Transverse colon (tissue), 4 donors: ENCODE measurements at regions of chr16 and their contacts with region 1.

Region 1: DNA sequence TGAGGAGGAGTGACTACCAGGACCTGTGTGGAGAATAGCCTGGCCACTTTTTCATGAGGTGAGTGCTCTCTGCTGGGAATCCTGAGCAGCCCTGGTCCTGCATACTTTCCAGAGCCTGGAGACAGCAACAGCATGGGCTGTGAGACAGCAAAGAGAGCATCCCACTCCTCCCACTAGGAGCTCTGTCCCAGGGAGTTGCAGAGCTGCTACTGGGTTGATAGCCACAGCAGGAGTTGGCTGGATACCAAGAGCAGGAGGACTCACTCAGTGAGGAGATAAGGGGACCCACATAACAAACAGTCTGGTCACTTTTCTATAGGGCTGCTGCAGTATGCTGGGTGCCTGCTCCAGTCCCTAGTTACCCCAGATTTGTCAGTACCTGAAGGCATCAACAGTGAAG is 439.3 kb upstream of the CDH8 start:
- DNase-seq: no peak
- H3K4me3 ChIP-seq: no peak overlapping the region
- H3K27ac ChIP-seq: no peak overlapping the region
- H3K4me1 ChIP-seq: no peaks in the 10 kb centered on the region
- H3K27me3 ChIP-seq: no peaks in the 10 kb centered on the region
- CTCF ChIP-seq: no peak
- EP300 ChIP-seq: no peak
- POLR2A ChIP-seq: no peak

Region 2: DNA sequence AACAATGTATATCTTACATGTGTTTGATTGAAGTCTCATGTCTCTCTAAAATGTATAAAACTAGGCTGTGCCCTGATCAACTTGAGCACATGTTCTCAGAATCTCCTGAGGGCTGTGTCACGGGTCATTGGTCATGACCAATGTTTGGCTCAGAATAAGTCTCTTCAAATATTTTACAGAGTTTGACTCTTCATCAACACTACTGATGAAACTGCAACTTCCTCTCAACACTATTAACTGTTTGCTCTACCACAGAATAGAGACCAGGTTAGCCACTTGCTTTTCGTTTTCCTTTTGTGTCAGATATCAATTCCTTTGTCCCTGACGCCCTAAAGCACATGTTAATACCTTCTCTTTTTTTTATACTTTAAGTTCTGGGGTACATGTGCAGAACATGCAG is 797.4 kb before region 1 on chr16:
- in situ Hi-C with region 1: no loop called
- intact Hi-C with region 1: loop called (anchors 5 kb)
- DNase-seq: no peak
- H3K4me3 ChIP-seq: no peak overlapping the region
- H3K27ac ChIP-seq: no peak overlapping the region
- H3K4me1 ChIP-seq: no peaks in the 10 kb centered on the region
- H3K27me3 ChIP-seq: no peaks in the 10 kb centered on the region
- CTCF ChIP-seq: no peak
- EP300 ChIP-seq: no peak
- POLR2A ChIP-seq: no peak